ENCODE measurements at regions of chr19 and their contacts with region 1.

Region 1: DNA sequence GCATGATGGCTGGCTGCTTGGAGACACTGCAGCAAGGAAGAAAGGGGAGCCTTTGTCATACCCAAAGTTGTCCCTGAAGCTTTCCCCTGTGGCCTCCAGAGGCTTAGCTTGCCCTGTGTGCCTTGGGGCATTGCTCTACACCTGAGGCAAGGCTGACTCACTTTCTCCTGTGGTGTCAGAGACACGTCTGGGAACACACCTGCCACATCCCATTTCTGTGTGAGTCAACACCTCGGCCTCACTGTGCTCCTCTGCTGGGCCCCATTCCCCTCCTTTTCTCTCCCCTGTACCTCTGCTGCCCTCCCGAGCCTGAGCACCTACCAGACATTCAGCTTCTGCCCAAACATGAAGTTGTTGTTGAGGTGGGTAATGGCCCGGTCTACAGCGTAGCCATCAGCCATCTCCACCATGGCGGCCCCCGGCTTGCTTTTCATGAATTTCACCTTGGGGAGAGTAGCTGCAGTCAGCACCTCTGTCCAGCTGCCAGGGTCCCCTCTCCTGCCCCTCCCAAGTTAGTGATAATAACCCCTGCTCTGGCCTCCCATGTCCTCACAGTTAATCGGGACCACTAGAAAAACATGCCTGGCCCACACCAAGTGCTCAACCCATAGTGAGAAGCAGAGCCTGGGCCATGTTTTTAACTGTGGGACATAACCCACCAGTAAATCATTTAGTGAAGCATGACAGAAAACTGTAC is 7.1 kb upstream of the ECH1 start:
- DNase-seq: peak; percentile 92
- H3K4me3 Mint-ChIP-seq: peak overlapping the region; percentile 51
- H3K27ac Mint-ChIP-seq: peak overlapping the region; percentile 85
- H3K4me1 Mint-ChIP-seq: peaks cover 21% of the 10 kb centered on the region
- H3K27me3 Mint-ChIP-seq: no peaks in the 10 kb centered on the region
- CTCF ChIP-seq: peak; percentile 37

Region 2: DNA sequence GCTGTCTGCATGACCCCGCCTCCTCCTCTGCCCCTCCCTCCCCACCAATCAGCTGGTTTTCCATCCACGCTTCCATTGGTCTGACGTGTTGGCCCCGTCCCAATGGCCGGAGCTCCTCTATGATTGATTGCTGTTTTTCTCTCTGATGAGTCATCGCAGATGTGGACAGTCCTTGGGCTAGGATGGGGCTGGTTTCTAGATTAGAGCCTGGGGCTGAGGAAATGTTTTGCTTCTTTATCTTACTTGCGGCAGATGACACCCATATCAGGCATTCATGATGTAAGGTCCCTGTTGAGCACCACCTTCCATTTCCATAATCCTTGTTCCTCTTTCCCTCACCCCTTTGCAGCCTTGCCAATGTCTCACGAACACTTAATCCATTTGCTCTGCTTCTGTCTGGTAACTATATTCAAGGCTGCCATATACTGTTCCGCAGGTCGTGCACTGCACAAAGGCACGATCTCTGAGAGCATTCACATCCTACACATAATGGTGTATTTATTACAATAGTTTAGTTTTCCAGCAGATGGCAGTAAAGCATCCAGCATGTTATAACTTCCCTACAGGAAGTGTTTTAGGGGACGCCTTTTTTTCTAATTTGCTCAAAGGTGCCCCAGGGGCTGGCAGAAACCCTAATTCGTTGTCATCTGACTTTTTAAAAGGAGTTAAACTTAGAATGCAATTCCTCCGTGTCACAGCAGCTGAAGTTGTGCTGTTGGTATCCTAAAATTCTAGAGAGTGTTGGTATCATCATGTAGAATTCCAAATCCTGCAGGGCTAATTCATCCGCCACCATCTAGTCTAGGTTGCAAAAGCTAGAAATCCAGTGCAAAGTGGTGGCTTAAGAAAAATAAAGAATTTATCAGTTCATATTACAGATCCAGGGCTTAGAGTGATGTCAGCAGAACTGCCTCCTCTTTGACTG is 294.4 kb before region 1 on chr19:
- CTCF ChIA-PET with region 1: interaction called, 3 read pairs
- POLR2A ChIA-PET with region 1: interaction called, 3 read pairs
- intact Hi-C with region 1: loop called (anchors 1 kb)
- DNase-seq: peak; percentile 93
- H3K4me3 Mint-ChIP-seq: peak overlapping the region; percentile 56
- H3K27ac Mint-ChIP-seq: no peak overlapping the region
- H3K4me1 Mint-ChIP-seq: peaks cover 12% of the 10 kb centered on the region
- H3K27me3 Mint-ChIP-seq: no peaks in the 10 kb centered on the region
- CTCF ChIP-seq: peak; percentile 66

Region 3: GRCh38 chr19:38658462-38659306 is 180.0 kb before region 1 on chr19:
- CTCF ChIA-PET with region 1: interaction called, 5 read pairs
- POLR2A ChIA-PET with region 1: interaction called, 29 read pairs
- intact Hi-C with region 1: no loop called
- DNase-seq: peak; percentile 99
- H3K4me3 Mint-ChIP-seq: peak overlapping the region; percentile 61
- H3K27ac Mint-ChIP-seq: peak overlapping the region; percentile 100
- H3K4me1 Mint-ChIP-seq: peaks cover 46% of the 10 kb centered on the region
- H3K27me3 Mint-ChIP-seq: no peaks in the 10 kb centered on the region
- CTCF ChIP-seq: no peak

Region 4: GRCh38 chr19:38729653-38730469 is 108.9 kb before region 1 on chr19:
- CTCF ChIA-PET with region 1: interaction called, 3 read pairs
- POLR2A ChIA-PET with region 1: interaction called, 12 read pairs
- intact Hi-C with region 1: loop called (anchors 2 kb)
- DNase-seq: peak; percentile 64
- H3K4me3 Mint-ChIP-seq: no peak overlapping the region
- H3K27ac Mint-ChIP-seq: peak overlapping the region; percentile 65
- H3K4me1 Mint-ChIP-seq: peaks cover 23% of the 10 kb centered on the region
- H3K27me3 Mint-ChIP-seq: no peaks in the 10 kb centered on the region
- CTCF ChIP-seq: peak; percentile 78

Region 5: DNA sequence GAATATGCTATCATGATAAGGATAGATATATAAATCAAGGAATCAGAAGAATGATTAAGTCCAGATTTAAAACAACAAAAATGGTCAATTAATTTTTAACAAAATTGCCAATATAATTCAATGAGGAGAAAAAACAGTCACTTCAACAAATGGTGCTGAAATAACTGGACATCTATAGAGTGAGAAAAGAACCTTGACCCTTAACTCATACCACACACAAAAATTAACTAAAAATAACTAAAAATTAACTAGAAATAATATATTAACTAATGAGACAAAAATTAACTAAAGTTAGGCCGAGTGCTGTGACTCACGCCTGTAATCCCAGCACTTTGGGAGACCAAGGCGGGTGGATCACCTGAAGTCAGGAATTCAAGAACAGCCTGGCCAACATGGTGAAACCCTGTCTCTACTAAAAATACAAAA is 74.9 kb before region 1 on chr19:
- CTCF ChIA-PET with region 1: no interaction called
- POLR2A ChIA-PET with region 1: no interaction called
- intact Hi-C with region 1: no loop called
- DNase-seq: no peak
- H3K4me3 Mint-ChIP-seq: no peak overlapping the region
- H3K27ac Mint-ChIP-seq: no peak overlapping the region
- H3K4me1 Mint-ChIP-seq: no peaks in the 10 kb centered on the region
- H3K27me3 Mint-ChIP-seq: no peaks in the 10 kb centered on the region
- CTCF ChIP-seq: no peak

Region 6: GRCh38 chr19:38849860-38850435 is 11.2 kb after region 1 on chr19 and contains the start of gene HNRNPL:
- CTCF ChIA-PET with region 1: interaction called, 15 read pairs
- POLR2A ChIA-PET with region 1: interaction called, 59 read pairs
- intact Hi-C with region 1: no loop called
- DNase-seq: peak; percentile 100
- H3K4me3 Mint-ChIP-seq: peak within 1 kb of the TSS; percentile 97
- H3K27ac Mint-ChIP-seq: peak within 1 kb of the TSS; percentile 99
- H3K4me1 Mint-ChIP-seq: peaks cover 18% of the 10 kb centered on the region
- H3K27me3 Mint-ChIP-seq: no peaks in the 10 kb centered on the region
- CTCF ChIP-seq: no peak
- total RNA-seq, gene HNRNPL: 288 and 421 TPM in 2 replicates

Region 7: GRCh38 chr19:38929929-38930775 is 91.4 kb after region 1 on chr19 and contains the start of gene SARS2:
- CTCF ChIA-PET with region 1: interaction called, 5 read pairs
- POLR2A ChIA-PET with region 1: interaction called, 16 read pairs
- intact Hi-C with region 1: no loop called
- DNase-seq: peak; percentile 93
- H3K4me3 Mint-ChIP-seq: peak within 1 kb of the TSS; percentile 85
- H3K27ac Mint-ChIP-seq: peak within 1 kb of the TSS; percentile 95
- H3K4me1 Mint-ChIP-seq: peaks cover 14% of the 10 kb centered on the region
- H3K27me3 Mint-ChIP-seq: no peaks in the 10 kb centered on the region
- CTCF ChIP-seq: peak; percentile 95
- total RNA-seq, gene SARS2: 9.3 and 23.6 TPM in 2 replicates

Measured in MCF 10A (cell line).